Tibial artery (tissue), 4 donors: ENCODE measurements at regions of chr15 and their contacts with region 1.

Region 1: GRCh38 chr15:48855501-48856440 is 22.2 kb upstream of the EID1 start:
- DNase-seq: no peak
- H3K4me3 ChIP-seq: no peak overlapping the region
- H3K27ac ChIP-seq: no peak overlapping the region
- H3K4me1 ChIP-seq: peaks cover 0 to 10% (median 2%) of the 10 kb centered on the region in 4 donors
- H3K27me3 ChIP-seq: no peaks in the 10 kb centered on the region
- CTCF ChIP-seq: peak; percentile 23 to 32

Region 2: DNA sequence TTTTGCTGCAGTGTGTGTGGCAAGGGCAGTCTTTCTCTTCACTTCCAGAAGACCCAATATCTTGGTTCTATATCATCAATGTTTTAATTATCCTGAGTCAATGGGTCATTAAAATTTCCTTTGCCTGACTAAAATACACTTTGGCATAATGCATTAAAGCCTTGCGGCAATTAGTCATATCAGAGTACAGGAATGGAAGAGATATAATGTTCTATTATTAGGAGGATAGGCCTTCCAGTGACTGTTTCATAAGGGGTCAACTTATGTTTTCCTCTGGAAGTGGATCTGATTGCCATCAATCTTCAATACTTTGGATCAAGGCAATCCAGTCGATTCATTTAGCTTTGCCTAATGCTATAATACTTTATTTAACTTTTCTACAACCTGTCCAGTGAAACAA is 199.9 kb after region 1 on chr15:
- intact Hi-C with region 1: no loop called
- DNase-seq: no peak
- H3K4me3 ChIP-seq: no peak overlapping the region
- H3K27ac ChIP-seq: no peak overlapping the region
- H3K4me1 ChIP-seq: peaks cover 0 to 5% (median 2%) of the 10 kb centered on the region in 4 donors
- H3K27me3 ChIP-seq: no peaks in the 10 kb centered on the region
- CTCF ChIP-seq: no peak

Region 3: GRCh38 chr15:50145451-50145872 is 1289.7 kb after region 1 on chr15:
- intact Hi-C with region 1: loop called (anchors 10 kb)
- DNase-seq: no peak
- H3K4me3 ChIP-seq: no peak overlapping the region
- H3K27ac ChIP-seq: no peak overlapping the region
- H3K4me1 ChIP-seq: no peaks in the 10 kb centered on the region
- H3K27me3 ChIP-seq: no peaks in the 10 kb centered on the region
- CTCF ChIP-seq: peak; percentile 51 to 77

Region 4: GRCh38 chr15:50828610-50829219 is 1972.9 kb after region 1 on chr15:
- intact Hi-C with region 1: no loop called
- DNase-seq: peak in 1 of 2 donors; percentile 37
- H3K4me3 ChIP-seq: no peak overlapping the region
- H3K27ac ChIP-seq: no peak overlapping the region
- H3K4me1 ChIP-seq: no peaks in the 10 kb centered on the region
- H3K27me3 ChIP-seq: no peaks in the 10 kb centered on the region
- CTCF ChIP-seq: no peak